ENCODE measurements at regions of chr17 and their contacts with region 1.

Region 1: DNA sequence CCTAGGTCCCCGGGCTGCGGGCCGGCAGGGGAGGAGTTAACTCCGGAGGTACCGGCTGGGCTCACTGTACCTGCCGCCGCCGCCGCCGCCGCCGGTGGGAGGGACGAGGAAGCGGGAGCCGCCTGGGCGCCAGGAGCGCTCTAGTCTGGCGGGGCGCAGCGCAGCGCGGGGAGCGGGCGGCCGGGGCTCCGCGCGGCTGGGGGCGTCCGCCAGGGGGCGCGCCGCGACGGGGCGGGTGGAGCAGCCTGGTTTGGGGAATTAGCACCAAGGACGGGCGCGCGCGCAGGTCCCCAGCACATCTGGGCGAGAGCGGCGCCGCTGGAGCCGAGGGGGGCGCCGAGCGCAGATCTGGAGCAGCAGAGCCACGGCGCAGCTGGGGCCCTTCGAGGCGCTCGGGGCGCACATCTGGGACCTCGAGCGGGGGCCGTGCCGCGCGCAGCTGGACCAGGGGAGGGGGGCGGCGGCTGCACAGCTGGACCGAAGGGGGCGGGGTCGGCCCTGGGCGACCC is at the start of gene NXPH3:
- DNase-seq: no peak
- H3K4me3 ChIP-seq: peak within 1 kb of the TSS; percentile 64
- CTCF ChIP-seq: peak; percentile 29

Region 2: GRCh38 chr17:49597928-49598655 is 22.5 kb after region 1 on chr17:
- CTCF ChIA-PET with region 1: interaction called, 11 read pairs
- POLR2A ChIA-PET with region 1: no interaction called
- DNase-seq: no peak
- H3K4me3 ChIP-seq: no peak overlapping the region
- CTCF ChIP-seq: no peak

Measured in AG04449 (cell line).